Calu3 (cell line): ENCODE measurements at regions of chr4 and their contacts with region 1.

Region 1: DNA sequence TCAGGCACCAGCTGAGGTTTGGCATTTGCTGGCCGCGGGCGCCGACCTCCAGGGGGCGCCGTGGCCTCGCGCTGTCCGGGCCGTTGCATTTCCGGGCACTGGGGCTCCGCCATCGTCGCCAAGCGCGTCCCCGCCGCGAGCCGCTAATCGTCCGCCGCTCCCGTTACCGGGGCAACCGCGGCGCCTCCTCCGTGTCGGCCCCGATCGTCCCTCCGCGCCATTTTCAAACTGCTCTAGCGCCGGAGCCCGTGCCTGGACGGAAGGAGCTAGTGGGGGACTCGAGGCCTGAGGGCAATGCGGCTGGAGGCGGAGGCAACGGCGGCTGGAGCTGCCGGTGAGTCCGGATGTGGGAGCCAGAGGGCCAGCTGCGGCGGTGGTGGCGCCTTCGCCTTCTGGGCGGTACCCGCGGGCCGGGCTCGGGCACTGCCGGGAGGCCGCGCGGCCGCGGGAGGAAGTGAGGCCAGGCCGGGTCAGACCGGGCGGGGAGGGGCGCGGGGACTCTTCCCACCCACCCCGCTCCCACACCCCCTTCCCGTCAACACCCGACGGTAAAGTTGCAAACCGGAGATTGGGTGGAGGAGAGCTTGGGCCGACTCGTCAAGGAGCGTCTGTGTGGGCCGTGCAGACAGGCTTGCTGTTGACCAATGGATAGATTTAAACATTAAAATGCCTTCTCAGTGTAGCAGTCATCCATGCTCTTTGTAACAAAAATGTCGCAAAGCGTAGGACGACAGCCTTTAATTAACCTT is at the start of gene CEP135:
- DNase-seq: peak; percentile 92
- H3K4me3 Mint-ChIP-seq: peak within 1 kb of the TSS; percentile 77
- H3K27ac Mint-ChIP-seq: peak within 1 kb of the TSS; percentile 86
- H3K4me1 Mint-ChIP-seq: peaks cover 16% of the 10 kb centered on the region
- H3K27me3 Mint-ChIP-seq: no peaks in the 10 kb centered on the region
- CTCF ChIP-seq: peak; percentile 82
- total RNA-seq, gene CEP135: 8.0 and 9.4 TPM in 2 replicates

Region 2: DNA sequence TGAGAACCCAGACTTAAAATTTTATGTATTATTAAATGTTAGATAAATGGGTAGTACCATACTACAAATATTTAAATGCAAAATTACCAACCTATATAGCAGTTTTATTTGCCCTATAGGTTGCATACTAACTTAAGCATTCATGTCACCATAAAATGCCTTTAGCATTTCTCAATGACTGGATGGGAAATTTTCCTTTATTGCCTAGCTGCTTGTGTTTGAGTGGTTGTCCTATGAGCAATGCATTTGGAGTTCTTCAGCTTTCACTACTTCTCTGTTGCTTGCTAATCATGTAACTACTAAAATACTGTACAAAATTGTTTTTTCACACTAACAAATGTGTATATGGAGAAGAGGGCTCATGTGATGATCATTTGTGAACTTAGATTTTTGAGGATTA is 44.3 kb before region 1 on chr4:
- CTCF ChIA-PET with region 1: no interaction called
- intact Hi-C with region 1: loop called (anchors 5 kb)
- DNase-seq: no peak
- H3K4me3 Mint-ChIP-seq: no peak overlapping the region
- H3K27ac Mint-ChIP-seq: no peak overlapping the region
- H3K4me1 Mint-ChIP-seq: no peaks in the 10 kb centered on the region
- H3K27me3 Mint-ChIP-seq: no peaks in the 10 kb centered on the region
- CTCF ChIP-seq: no peak

Region 3: GRCh38 chr4:56048702-56049431 is 100.0 kb after region 1 on chr4:
- CTCF ChIA-PET with region 1: interaction called, 3 read pairs
- intact Hi-C with region 1: loop called (anchors 10 kb)
- DNase-seq: peak; percentile 68
- H3K4me3 Mint-ChIP-seq: peak overlapping the region; percentile 89
- H3K27ac Mint-ChIP-seq: no peak overlapping the region
- H3K4me1 Mint-ChIP-seq: peaks cover 9% of the 10 kb centered on the region
- H3K27me3 Mint-ChIP-seq: no peaks in the 10 kb centered on the region
- CTCF ChIP-seq: no peak

Region 4: DNA sequence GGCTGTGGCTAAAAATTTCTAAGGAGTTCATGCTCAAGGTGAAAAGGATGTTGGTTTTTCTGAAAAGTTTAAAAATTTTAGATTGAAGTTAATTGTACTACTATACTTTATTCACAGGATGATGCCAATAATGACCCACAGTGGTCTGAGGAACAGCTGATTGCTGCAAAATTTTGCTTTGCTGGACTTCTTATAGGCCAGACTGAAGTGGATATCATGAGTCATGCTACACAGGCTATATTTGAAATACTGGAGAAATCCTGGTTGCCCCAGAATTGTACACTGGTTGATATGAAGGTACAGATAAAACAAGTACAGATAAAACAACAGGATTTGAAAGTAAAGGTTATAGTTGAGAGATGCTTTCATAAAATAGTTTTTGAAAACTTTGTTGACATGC is 499.4 kb after region 1 on chr4:
- CTCF ChIA-PET with region 1: no interaction called
- intact Hi-C with region 1: no loop called
- DNase-seq: no peak
- H3K4me3 Mint-ChIP-seq: no peak overlapping the region
- H3K27ac Mint-ChIP-seq: no peak overlapping the region
- H3K4me1 Mint-ChIP-seq: peaks cover 10% of the 10 kb centered on the region
- H3K27me3 Mint-ChIP-seq: no peaks in the 10 kb centered on the region
- CTCF ChIP-seq: no peak